ENCODE measurements at regions of chrX and their contacts with region 1.

Region 1: DNA sequence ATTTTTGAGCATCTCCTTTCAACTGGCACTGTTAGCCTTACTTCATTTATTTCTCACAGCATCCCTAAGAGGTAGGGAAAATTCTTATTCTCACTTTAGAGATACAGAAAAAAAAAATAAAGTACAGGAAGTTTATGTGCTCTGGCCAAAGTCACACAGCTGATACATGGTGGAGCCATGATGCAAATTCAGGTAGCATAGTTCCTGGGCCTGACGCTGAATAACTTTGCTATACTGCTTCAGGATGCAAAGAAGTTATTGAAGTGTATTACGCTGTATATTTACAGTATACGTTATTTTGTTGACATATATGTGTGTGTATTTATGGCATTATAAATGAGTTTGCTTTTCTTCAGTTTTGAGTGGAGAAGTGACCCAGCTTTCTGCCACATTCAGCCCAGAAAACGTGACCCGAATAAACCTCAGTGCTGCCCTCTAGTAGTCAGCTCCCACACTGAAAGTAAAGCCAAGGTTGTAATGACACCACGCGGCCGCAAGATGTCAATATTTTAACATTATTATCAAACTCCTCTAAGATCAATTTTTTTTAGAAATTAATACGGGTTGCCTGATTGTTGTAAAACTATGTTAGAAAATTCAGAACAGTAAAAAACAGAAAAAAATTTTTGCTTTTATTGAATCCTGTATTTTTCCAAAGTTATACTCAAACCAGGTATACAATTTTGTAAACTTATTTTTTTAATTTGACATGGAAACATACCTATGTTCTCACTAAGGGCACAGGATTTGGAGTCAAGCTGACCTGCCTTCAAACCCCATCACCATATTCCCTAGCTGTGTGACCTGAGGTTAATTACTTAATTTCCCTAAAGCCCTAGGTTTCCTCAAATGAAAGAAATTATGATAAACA is 3.8 kb upstream of the GUCY2F start:
- DNase-seq: peak; percentile 43
- ATAC-seq: no peak

Region 2: DNA sequence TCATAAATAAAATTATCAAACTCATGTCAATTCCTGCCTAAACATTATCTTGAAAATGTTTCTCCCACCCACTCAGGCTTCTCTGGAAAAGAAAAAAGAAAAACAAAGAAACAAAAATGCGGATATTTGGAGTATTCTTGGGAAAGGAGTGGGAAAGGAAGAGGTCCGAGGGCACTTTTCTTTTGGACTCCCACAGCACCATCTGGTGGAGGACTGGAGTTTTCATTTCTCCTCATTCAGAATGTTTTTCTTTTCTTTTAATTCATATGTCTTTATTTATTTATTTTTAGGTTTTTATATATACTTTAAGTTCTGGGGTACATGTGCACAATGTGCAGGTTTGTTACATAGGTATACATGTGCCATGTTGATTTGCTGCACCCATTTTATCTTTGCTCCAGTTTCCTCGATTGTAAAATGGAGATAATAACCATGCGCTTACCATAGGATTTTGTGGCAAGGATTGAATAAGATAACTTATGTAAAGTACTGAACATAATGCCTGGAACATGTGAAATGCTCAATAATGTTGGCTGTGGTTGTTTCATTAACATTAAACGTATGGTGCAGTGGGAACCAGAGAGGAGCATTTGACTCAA is 147.3 kb after region 1 on chrX:
- intact Hi-C with region 1: loop called (anchors 5 kb)
- DNase-seq: no peak
- ATAC-seq: no peak

Region 3: GRCh38 chrX:109684136-109684535 is 198.4 kb after region 1 on chrX:
- intact Hi-C with region 1: no loop called
- DNase-seq: no peak
- ATAC-seq: no peak

Region 4: GRCh38 chrX:109886122-109886761 is 400.5 kb after region 1 on chrX:
- intact Hi-C with region 1: loop called (anchors 10 kb)
- DNase-seq: peak; percentile 39
- ATAC-seq: no peak

Measured in Right ventricle myocardium superior (tissue), 1 donor.